Naive thymus-derived CD8-positive, alpha-beta T cell (primary cell): ENCODE measurements at regions of chr6 and their contacts with region 1.

Region 1: DNA sequence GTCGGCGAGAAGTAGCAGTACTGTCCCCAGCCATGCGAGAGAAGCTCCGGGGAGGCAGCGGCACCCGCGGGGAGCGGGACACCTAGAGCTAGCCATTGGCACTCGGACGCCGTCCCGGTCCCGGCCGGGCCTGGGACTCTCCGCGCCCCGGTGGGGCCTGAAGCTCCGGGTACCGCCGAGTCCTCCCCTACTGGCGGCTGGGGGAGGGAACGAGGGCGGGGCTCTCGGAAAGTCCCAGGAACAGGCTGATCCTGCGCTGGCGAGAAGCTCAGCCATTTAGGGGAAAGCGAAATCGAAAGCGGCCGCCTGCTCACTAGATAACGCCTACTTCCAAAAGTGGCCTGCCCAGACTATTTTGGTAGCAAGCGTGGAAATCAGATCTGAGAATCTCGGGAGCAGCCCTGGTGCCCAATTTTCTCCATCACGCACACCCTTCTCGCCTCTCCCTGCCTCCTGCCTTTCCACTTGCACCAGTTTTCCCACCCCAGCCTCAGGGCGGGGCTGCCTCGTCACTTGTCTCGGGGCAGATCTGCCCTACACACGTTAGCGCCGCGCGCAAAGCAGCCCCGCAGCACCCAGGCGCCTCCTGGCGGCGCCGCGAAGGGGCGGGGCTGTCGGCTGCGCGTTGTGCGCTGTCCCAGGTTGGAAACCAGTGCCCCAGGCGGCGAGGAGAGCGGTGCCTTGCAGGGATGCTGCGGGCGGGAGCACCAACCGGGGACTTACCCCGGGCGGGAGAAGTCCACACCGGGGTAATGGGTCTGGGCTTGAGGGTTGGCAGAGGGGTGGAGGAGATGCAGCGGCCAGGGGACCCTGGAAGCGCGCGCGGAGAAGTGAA is at the starts of genes PSMB9 and TAP1:
- DNase-seq: peak; percentile 88 to 99 (median 92)
- ATAC-seq: peak; percentile 82 to 83
- H3K4me3 Mint-ChIP-seq: peak within 1 kb of the TSS; percentile 90 to 100 (median 98)
- H3K27ac Mint-ChIP-seq: peak within 1 kb of the TSS; percentile 98 to 100 (median 100)
- H3K4me1 Mint-ChIP-seq: peaks cover 46 to 76% (median 72%) of the 10 kb centered on the region in 4 donors
- H3K27me3 Mint-ChIP-seq: no peaks in the 10 kb centered on the region
- polyA plus RNA-seq, gene PSMB9: 402 to 432 (median 424) TPM
- polyA plus RNA-seq, gene TAP1: 197 to 283 (median 230) TPM

Region 2: GRCh38 chr6:32692019-32692418 is 161.7 kb before region 1 on chr6:
- POLR2A ChIA-PET with region 1: no interaction called
- DNase-seq: peak in 9 of 10 donors; percentile 42 to 81 (median 47)
- ATAC-seq: peak; percentile 71 to 78
- H3K4me3 Mint-ChIP-seq: no peak overlapping the region
- H3K27ac Mint-ChIP-seq: peak overlapping the region in 1 of 10 donors; percentile 27
- H3K4me1 Mint-ChIP-seq: peaks cover 0 to 28% (median 4%) of the 10 kb centered on the region in 4 donors
- H3K27me3 Mint-ChIP-seq: peaks cover 7 to 31% (median 25%) of the 10 kb centered on the region in 5 donors

Region 3: DNA sequence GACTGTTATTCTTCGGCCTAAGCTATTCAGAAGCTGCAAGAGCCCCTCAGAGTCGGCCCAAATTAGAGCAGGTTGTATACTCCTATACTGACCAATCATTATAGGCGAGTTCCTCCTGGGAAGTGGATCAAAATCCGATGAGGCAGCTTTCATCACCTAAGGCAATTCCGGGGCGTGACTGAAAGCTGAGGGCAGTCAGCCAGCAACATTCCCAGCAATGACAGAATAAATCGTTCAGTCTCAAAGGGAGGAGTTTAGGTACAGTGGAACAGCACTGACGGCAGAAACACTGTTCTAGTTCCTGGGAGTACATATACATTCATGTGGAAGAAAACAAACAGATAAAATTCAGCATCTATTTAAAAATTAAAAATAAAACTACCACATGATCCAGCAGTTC is 101.2 kb before region 1 on chr6:
- POLR2A ChIA-PET with region 1: no interaction called
- DNase-seq: no peak
- ATAC-seq: no peak
- H3K4me3 Mint-ChIP-seq: no peak overlapping the region
- H3K27ac Mint-ChIP-seq: no peak overlapping the region
- H3K4me1 Mint-ChIP-seq: no peaks in the 10 kb centered on the region
- H3K27me3 Mint-ChIP-seq: peaks cover 9 to 38% (median 21%) of the 10 kb centered on the region in 5 donors

Region 4: GRCh38 chr6:32779036-32779435 is 74.7 kb before region 1 on chr6:
- POLR2A ChIA-PET with region 1: no interaction called
- DNase-seq: no peak
- ATAC-seq: no peak
- H3K4me3 Mint-ChIP-seq: no peak overlapping the region
- H3K27ac Mint-ChIP-seq: no peak overlapping the region
- H3K4me1 Mint-ChIP-seq: peaks cover 0 to 4% (median 0%) of the 10 kb centered on the region in 4 donors
- H3K27me3 Mint-ChIP-seq: peaks cover 3 to 10% (median 7%) of the 10 kb centered on the region in 5 donors

Region 5: GRCh38 chr6:32868257-32868788 is 14.6 kb after region 1 on chr6:
- POLR2A ChIA-PET with region 1: interaction called, 57 read pairs
- DNase-seq: peak; percentile 75 to 92 (median 84)
- ATAC-seq: peak; percentile 72 to 78
- H3K4me3 Mint-ChIP-seq: peak overlapping the region in 2 of 10 donors; percentile 2
- H3K27ac Mint-ChIP-seq: peak overlapping the region in 5 of 10 donors; percentile 9 to 93 (median 87)
- H3K4me1 Mint-ChIP-seq: peaks cover 9 to 37% (median 31%) of the 10 kb centered on the region in 4 donors
- H3K27me3 Mint-ChIP-seq: peaks cover 0 to 1% (median 0%) of the 10 kb centered on the region in 5 donors

Region 6: DNA sequence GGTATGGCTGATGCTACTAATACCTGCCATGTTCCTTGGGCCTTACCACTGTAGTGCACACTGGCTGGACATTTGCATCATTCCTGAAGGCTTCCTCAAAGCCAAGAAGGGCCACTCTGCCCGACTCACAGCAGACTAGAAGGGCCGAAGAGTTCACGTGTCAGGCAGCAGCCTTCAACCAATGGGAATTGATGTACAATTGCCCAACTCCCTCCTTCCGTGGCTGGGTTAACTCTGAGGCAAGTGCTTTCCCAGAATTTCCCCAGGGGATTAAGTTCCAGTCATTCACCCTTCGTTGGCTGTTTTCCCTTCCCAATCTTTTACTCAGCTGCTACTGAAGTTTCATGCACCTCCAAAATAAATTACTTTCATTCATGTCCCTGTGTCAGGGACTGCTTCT is 30.0 kb after region 1 on chr6:
- POLR2A ChIA-PET with region 1: no interaction called
- DNase-seq: no peak
- ATAC-seq: no peak
- H3K4me3 Mint-ChIP-seq: no peak overlapping the region
- H3K27ac Mint-ChIP-seq: no peak overlapping the region
- H3K4me1 Mint-ChIP-seq: peaks cover 0 to 5% (median 2%) of the 10 kb centered on the region in 4 donors
- H3K27me3 Mint-ChIP-seq: peaks cover 0 to 3% (median 0%) of the 10 kb centered on the region in 5 donors